ENCODE measurements at regions of chr21 and their contacts with region 1.

Region 1: GRCh38 chr21:25626757-25627156 is 12.3 kb upstream of the JAM2 start:
- DNase-seq: no peak
- H3K4me3 ChIP-seq: no peak overlapping the region
- CTCF ChIP-seq: no peak

Region 2: GRCh38 chr21:25589887-25590286 is 36.9 kb before region 1 on chr21:
- in situ Hi-C with region 1: loop called (anchors 5 kb)
- DNase-seq: no peak
- H3K4me3 ChIP-seq: no peak overlapping the region
- CTCF ChIP-seq: no peak

Region 3: DNA sequence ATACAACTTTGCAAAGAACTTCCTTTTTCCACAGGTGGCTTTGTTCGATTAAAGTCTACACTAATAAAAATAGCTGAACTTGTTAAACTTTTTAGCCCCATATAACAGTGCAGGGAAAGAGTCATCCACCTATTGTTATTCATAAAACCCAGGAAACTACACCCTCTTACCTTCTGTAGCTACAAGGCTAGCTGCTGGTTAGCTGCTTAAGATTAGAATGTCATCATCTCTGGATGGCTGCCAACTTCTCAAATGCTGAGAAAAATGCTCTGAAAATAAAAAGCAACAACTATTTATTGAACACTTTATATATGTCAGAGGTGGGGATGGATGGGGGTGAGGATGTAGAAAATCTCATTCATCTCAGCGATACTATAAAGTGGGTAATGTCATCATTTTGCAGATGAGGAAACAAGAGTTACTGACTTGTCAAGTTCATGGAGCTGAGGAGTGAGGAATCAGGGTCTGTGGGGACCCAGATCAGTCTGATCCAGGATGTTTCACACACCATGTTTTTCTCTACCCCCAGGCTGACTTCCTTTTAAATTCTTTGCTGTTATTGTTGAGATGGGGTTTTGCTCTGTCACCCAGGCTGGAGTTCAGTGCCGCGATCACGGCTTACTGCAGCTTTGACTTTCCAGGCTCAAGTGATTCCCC is 90.9 kb after region 1 on chr21:
- in situ Hi-C with region 1: loop called (anchors 10 kb)
- DNase-seq: no peak
- H3K4me3 ChIP-seq: no peak overlapping the region
- CTCF ChIP-seq: no peak

Measured in astrocyte of the cerebellum (primary cell).